ENCODE measurements at regions of chr6 and their contacts with region 1.

Region 1: DNA sequence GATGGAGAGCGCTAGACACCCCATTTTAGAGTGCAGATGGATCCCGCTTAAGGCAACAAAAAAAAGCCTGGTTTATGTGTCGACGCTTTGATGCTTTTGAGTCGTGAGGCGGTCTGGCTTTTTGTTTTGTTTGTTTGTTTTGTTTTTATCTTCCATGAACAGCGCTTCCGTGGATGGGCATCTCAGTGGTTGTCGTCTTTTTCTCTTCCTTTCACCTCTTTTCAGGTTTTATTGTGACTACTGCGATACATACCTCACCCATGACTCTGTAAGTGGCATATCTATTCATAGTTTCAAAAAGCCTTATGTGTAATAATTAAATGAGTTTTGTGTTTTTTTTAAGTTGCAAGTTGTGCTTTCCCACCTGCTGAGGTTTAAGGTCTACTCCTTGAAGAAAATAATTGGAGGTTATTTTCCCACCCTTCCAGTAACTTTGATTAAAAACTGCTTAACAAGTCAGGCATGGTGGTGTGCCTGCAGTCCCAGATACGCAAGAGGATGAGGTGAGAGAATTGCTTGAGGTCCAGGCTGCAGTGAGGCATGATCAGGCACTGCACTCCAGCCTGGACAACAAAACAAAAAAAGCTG is 476 bp downstream of the SNRPC start:
- DNase-seq: no peak
- H3K4me3 Mint-ChIP-seq: no peak overlapping the region
- H3K27ac Mint-ChIP-seq: no peak overlapping the region
- H3K4me1 Mint-ChIP-seq: peaks cover 16% of the 10 kb centered on the region
- H3K27me3 Mint-ChIP-seq: no peaks in the 10 kb centered on the region

Region 2: DNA sequence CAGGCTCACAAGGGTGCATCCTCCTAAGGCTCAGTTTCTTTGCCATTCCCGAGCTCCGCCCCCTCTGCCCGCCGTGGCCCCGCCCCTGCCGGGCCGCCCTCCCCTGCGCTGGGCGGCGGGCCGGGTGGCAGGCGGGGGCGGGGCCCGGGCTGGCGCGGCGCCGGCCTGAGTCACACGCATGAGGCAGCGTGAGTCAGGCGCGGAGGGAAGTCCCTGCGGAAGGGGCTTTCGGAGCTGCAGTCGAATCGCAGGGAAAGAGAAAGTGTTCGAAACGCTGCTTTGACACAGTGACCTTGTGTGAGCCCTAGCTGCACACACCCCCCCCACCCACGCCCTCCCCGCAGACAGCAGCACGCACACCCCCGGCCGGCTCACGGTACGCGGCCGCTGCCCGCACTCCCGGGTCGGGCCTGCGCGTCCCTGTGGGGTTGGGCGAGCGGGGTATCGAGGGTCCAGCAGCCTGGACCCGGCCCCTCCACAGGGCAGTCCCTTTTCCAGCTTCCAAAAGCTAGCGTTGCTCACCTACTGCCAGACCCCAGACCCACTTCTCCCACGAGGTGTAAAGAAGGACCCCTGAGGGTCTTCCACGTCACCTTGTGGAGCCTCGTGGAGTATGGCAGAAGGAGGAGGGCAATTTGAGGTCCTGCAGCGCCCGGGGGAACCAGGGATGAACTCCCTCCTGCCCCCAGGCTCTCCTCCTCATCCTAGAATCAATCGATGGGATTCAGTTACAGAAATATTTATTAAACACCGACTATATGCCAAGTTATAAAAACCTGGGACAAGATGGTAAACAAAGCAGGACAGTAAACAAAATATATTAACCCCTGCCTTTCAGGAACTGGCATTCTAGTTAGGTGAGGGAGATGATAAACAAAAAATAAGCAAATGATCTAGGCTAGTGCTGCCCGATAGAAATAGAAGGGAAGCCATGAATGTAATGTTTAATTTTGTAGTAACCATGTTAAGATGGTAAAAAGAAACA is 533.5 kb before region 1 on chr6:
- CTCF ChIA-PET with region 1: no interaction called
- intact Hi-C with region 1: loop called (anchors 5 kb)
- DNase-seq: peak; percentile 96
- H3K4me3 Mint-ChIP-seq: peak overlapping the region; percentile 69
- H3K27ac Mint-ChIP-seq: peak overlapping the region; percentile 92
- H3K4me1 Mint-ChIP-seq: peaks cover 43% of the 10 kb centered on the region
- H3K27me3 Mint-ChIP-seq: no peaks in the 10 kb centered on the region

Region 3: GRCh38 chr6:34656378-34657036 is 101.3 kb before region 1 on chr6:
- CTCF ChIA-PET with region 1: no interaction called
- intact Hi-C with region 1: loop called (anchors 5 kb)
- DNase-seq: peak; percentile 66
- H3K4me3 Mint-ChIP-seq: peak overlapping the region; percentile 61
- H3K27ac Mint-ChIP-seq: peak overlapping the region; percentile 89
- H3K4me1 Mint-ChIP-seq: peaks cover 44% of the 10 kb centered on the region
- H3K27me3 Mint-ChIP-seq: no peaks in the 10 kb centered on the region

Region 4: GRCh38 chr6:34696739-34697543 is 60.8 kb before region 1 on chr6 and contains the start of gene ILRUN:
- CTCF ChIA-PET with region 1: no interaction called
- intact Hi-C with region 1: loop called (anchors 1 kb)
- DNase-seq: peak; percentile 98
- H3K4me3 Mint-ChIP-seq: peak within 1 kb of the TSS; percentile 100
- H3K27ac Mint-ChIP-seq: peak within 1 kb of the TSS; percentile 99
- H3K4me1 Mint-ChIP-seq: peaks cover 44% of the 10 kb centered on the region
- H3K27me3 Mint-ChIP-seq: no peaks in the 10 kb centered on the region
- total RNA-seq, gene ILRUN: 51.4 to 53.3 TPM

Region 5: DNA sequence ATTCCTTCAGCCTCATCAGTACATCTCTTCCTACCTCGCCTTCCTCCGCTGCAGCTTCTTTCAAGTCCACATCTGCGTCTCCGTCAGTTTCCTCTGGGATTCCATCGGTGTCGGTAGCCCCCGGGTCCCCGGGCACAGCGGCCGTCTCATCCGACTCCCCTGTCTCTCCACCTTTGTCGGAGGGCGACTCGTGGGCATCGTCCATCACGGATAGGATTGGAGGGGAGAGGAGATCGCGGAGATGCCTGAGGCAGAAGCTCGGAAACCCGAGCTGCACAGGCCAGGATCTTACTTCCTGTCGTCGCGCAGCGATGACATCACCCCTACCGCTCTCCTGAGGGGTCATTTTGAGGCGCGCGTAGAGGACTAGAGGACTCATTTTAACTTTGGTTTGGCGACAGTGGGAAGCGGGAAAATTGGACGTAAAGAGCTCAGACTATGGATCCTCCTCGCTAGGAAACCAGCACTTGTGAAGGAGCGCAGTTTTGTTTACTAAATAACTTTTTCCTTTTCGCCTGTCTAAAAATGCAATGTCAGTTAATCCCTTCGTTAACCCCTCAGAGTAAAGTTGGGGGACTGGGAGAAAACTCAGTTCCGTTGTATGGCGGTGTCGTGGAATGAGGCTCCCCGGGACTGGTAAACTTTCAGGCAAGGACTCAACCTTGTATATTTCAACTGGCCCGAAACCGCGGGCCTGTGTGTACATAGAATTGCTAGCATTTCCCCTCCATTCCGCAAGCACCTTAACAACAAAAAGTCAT is 130.2 kb after region 1 on chr6 and contains the start of gene TAF11:
- CTCF ChIA-PET with region 1: no interaction called
- intact Hi-C with region 1: loop called (anchors 1 kb)
- DNase-seq: peak; percentile 97
- H3K4me3 Mint-ChIP-seq: peak within 1 kb of the TSS; percentile 99
- H3K27ac Mint-ChIP-seq: peak within 1 kb of the TSS; percentile 96
- H3K4me1 Mint-ChIP-seq: peaks cover 52% of the 10 kb centered on the region
- H3K27me3 Mint-ChIP-seq: no peaks in the 10 kb centered on the region
- total RNA-seq, gene TAF11: 27.3 to 28.5 TPM

Measured in activated naive CD4-positive, alpha-beta T cell treated with anti-CD3 and anti-CD28 coated beads for 36 hours (primary cell).